ENCODE measurements at regions of chr11 and their contacts with region 1.

Region 1: GRCh38 chr11:87290304-87290922 is 252.7 kb downstream of the TMEM135 start:
- DNase-seq: peak; percentile 65
- H3K4me3 Mint-ChIP-seq: no peak overlapping the region
- H3K27ac Mint-ChIP-seq: no peak overlapping the region
- H3K4me1 Mint-ChIP-seq: no peaks in the 10 kb centered on the region
- H3K27me3 Mint-ChIP-seq: no peaks in the 10 kb centered on the region

Region 2: GRCh38 chr11:86904001-86904400 is 386.4 kb before region 1 on chr11:
- intact Hi-C with region 1: no loop called
- DNase-seq: no peak
- H3K4me3 Mint-ChIP-seq: no peak overlapping the region
- H3K27ac Mint-ChIP-seq: no peak overlapping the region
- H3K4me1 Mint-ChIP-seq: no peaks in the 10 kb centered on the region
- H3K27me3 Mint-ChIP-seq: peaks cover 2% of the 10 kb centered on the region

Region 3: GRCh38 chr11:86938900-86939880 is 351.2 kb before region 1 on chr11:
- intact Hi-C with region 1: loop called (anchors 1 kb)
- DNase-seq: peak; percentile 65
- H3K4me3 Mint-ChIP-seq: no peak overlapping the region
- H3K27ac Mint-ChIP-seq: no peak overlapping the region
- H3K4me1 Mint-ChIP-seq: no peaks in the 10 kb centered on the region
- H3K27me3 Mint-ChIP-seq: peaks cover 15% of the 10 kb centered on the region

Region 4: DNA sequence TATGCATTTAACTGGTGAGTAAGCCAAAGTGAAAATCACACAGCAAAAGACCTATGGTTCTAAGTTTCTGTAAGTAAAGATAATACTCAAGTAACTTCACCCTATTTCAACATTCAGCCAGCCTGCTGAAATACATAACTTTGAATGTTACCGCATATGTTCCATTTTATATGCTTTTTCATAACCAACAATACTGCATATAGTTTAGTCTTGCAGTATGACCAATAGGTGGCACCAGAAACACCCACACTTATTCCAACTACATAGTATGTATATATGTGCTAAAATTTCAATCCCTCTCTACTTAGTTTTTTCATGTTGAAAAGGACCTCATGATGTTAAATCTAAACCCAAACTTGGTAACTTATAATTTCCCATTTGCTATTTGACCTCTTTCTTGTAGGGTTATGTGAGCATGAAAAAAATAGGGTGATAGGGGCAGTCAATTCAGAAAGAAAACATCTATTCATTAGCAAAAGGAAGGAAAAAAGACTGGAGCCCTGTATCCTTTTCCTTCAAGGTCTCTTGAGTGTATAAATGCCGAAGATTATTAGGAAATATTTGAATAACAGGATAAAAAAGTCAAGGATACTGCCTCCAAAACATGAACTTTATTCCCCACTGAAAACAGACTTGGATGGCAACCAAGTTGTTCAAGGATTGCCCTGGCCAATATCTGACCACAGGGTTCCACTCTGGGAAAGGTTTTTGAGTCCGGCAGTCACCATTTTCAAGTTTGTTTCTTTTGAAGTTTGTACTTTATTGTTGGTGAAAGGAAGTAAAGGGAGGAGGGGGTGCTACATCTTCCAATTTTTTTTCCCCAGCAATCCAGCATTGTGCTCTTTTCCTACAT is 311.4 kb before region 1 on chr11:
- intact Hi-C with region 1: loop called (anchors 1 kb)
- DNase-seq: peak; percentile 63
- H3K4me3 Mint-ChIP-seq: no peak overlapping the region
- H3K27ac Mint-ChIP-seq: no peak overlapping the region
- H3K4me1 Mint-ChIP-seq: no peaks in the 10 kb centered on the region
- H3K27me3 Mint-ChIP-seq: peaks cover 3% of the 10 kb centered on the region

Region 5: GRCh38 chr11:86990515-86990914 is 299.9 kb before region 1 on chr11:
- intact Hi-C with region 1: loop called (anchors 5 kb)
- DNase-seq: no peak
- H3K4me3 Mint-ChIP-seq: no peak overlapping the region
- H3K27ac Mint-ChIP-seq: no peak overlapping the region
- H3K4me1 Mint-ChIP-seq: no peaks in the 10 kb centered on the region
- H3K27me3 Mint-ChIP-seq: peaks cover 9% of the 10 kb centered on the region

Measured in activated CD4-positive, alpha-beta T cell treated with anti-CD3 and anti-CD28 coated beads, Interleukin-2, amount 10 ng/mL, durations not matched to agents 24 days and 14 days (primary cell).